PC-3 (cell line): ENCODE measurements at regions of chr2 and their contacts with region 1.

Region 1: GRCh38 chr2:174738841-174739240 is 25.4 kb downstream of the CHRNA1 start:
- DNase-seq: no peak
- ATAC-seq: no peak
- H3K4me3 ChIP-seq: no peak overlapping the region
- H3K27ac ChIP-seq: no peak overlapping the region
- H3K4me1 ChIP-seq: no peaks in the 10 kb centered on the region
- H3K27me3 ChIP-seq: peaks cover 3% of the 10 kb centered on the region; the same call in 1 of the 2 replicates
- CTCF ChIP-seq: no peak

Region 2: GRCh38 chr2:174713686-174714085 is 25.2 kb before region 1 on chr2:
- CTCF ChIA-PET with region 1: no interaction called
- POLR2A ChIA-PET with region 1: no interaction called
- intact Hi-C with region 1: loop called (anchors 1 kb)
- DNase-seq: no peak
- ATAC-seq: no peak
- H3K4me3 ChIP-seq: no peak overlapping the region
- H3K27ac ChIP-seq: no peak overlapping the region
- H3K4me1 ChIP-seq: no peaks in the 10 kb centered on the region
- H3K27me3 ChIP-seq: no peaks in the 10 kb centered on the region
- CTCF ChIP-seq: no peak

Region 3: DNA sequence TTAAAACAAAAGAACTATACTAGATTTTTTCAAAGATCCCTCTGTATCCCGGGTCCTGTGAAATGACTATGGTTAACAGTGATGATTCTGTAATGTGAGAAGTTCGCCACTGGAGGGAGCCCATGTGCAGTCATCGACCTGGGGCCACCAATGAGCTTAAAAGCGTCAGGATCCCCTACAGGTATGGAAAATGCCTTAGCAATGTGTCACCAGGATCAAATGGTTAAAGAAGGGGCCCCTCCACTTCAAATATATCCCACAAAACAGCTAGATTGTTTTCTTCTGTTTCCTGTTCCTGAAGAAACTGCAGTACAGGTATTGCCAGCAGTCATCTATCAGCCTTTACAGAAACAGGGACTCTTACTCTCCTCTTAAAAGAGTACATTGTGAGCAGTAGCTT is 10.1 kb after region 1 on chr2:
- CTCF ChIA-PET with region 1: no interaction called
- POLR2A ChIA-PET with region 1: no interaction called
- intact Hi-C with region 1: no loop called
- DNase-seq: peak; percentile 91
- ATAC-seq: peak; percentile 80
- H3K4me3 ChIP-seq: no peak overlapping the region
- H3K27ac ChIP-seq: no peak overlapping the region
- H3K4me1 ChIP-seq: peaks cover 20% of the 10 kb centered on the region
- H3K27me3 ChIP-seq: no peaks in the 10 kb centered on the region
- CTCF ChIP-seq: peak; percentile 88

Region 4: GRCh38 chr2:174868878-174869277 is 130.0 kb after region 1 on chr2:
- CTCF ChIA-PET with region 1: no interaction called
- POLR2A ChIA-PET with region 1: no interaction called
- intact Hi-C with region 1: no loop called
- DNase-seq: no peak
- ATAC-seq: no peak
- H3K4me3 ChIP-seq: no peak overlapping the region
- H3K27ac ChIP-seq: no peak overlapping the region
- H3K4me1 ChIP-seq: no peaks in the 10 kb centered on the region
- H3K27me3 ChIP-seq: no peaks in the 10 kb centered on the region
- CTCF ChIP-seq: no peak